ENCODE measurements at regions of chr15 and their contacts with region 1.

Region 1: DNA sequence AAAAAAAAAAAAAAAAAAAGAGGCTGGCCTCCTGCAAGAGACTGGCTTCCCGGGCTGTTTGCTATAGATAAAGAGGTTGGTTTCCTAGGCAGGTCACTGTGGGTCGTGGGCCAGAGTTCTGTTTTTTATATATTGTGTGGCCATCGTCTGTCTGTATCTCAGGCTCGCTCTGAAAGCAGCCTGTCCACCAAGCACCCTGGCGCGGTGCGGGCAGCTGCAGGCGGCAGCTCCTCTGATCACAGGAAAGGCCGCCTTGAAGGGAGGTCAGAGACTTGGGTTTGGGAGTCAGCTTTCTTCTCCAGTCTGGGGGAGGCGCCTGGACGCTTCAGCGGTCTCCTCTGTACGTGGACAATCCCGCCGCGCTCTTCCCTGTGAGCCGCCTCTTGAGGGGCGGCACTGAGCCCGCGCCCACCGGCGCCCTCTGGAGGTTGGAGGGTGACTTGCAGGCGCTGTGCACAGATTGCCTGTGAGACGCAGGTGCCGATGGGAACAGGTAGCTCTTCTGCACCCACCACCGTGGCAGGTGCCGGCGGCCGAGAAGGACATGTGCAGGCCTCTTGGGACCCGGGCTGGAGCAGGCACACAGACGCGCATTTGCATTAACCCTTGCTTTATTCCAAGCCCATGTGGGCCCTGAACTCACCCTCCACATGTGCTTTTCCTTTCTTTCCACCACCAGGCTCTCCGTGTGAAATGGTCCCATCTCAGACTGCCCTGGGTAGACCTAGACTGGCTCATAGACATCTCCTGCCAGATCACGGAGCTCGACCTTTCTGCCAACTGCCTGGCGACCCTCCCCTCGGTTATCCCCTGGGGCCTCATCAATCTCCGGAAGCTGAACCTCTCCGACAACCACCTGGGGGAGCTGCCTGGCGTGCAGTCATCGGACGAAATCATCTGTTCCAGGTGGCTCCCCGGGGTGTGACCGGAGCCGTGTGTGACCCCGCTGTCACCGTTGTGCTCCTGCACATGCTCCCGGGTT is 89.3 kb downstream of the LRRK1 start:
- DNase-seq: peak; percentile 89
- ATAC-seq: peak; percentile 96
- H3K4me3 Mint-ChIP-seq: peak overlapping the region; percentile 85
- H3K27ac Mint-ChIP-seq: no peak overlapping the region
- H3K4me1 Mint-ChIP-seq: peaks cover 23% of the 10 kb centered on the region
- H3K27me3 Mint-ChIP-seq: no peaks in the 10 kb centered on the region
- CTCF ChIP-seq: peak; percentile 62

Region 2: GRCh38 chr15:100627789-100628395 is 380.6 kb before region 1 on chr15:
- CTCF ChIA-PET with region 1: interaction called, 17 read pairs
- POLR2A ChIA-PET with region 1: no interaction called
- intact Hi-C with region 1: loop called (anchors 1 kb)
- DNase-seq: no peak
- ATAC-seq: peak; percentile 79
- H3K4me3 Mint-ChIP-seq: no peak overlapping the region
- H3K27ac Mint-ChIP-seq: no peak overlapping the region
- H3K4me1 Mint-ChIP-seq: peaks cover 4% of the 10 kb centered on the region
- H3K27me3 Mint-ChIP-seq: no peaks in the 10 kb centered on the region
- CTCF ChIP-seq: peak; percentile 84

Region 3: GRCh38 chr15:100929641-100930042 is 78.8 kb before region 1 on chr15:
- CTCF ChIA-PET with region 1: interaction called, 543 read pairs
- POLR2A ChIA-PET with region 1: interaction called, 8 read pairs
- intact Hi-C with region 1: no loop called
- DNase-seq: no peak
- ATAC-seq: no peak
- H3K4me3 Mint-ChIP-seq: no peak overlapping the region
- H3K27ac Mint-ChIP-seq: no peak overlapping the region
- H3K4me1 Mint-ChIP-seq: peaks cover 74% of the 10 kb centered on the region
- H3K27me3 Mint-ChIP-seq: no peaks in the 10 kb centered on the region
- CTCF ChIP-seq: no peak

Region 4: GRCh38 chr15:101258238-101259144 is 250.0 kb after region 1 on chr15:
- CTCF ChIA-PET with region 1: interaction called, 48 read pairs
- POLR2A ChIA-PET with region 1: no interaction called
- intact Hi-C with region 1: no loop called
- DNase-seq: no peak
- ATAC-seq: peak; percentile 77
- H3K4me3 Mint-ChIP-seq: no peak overlapping the region
- H3K27ac Mint-ChIP-seq: no peak overlapping the region
- H3K4me1 Mint-ChIP-seq: peaks cover 4% of the 10 kb centered on the region
- H3K27me3 Mint-ChIP-seq: peaks cover 7% of the 10 kb centered on the region
- CTCF ChIP-seq: peak; percentile 46

Measured in activated B cell treated with CpG ODN at 0.5 μM for 24 hours (primary cell).